B cell (primary cell): ENCODE measurements at regions of chr9 and their contacts with region 1.

Region 1: DNA sequence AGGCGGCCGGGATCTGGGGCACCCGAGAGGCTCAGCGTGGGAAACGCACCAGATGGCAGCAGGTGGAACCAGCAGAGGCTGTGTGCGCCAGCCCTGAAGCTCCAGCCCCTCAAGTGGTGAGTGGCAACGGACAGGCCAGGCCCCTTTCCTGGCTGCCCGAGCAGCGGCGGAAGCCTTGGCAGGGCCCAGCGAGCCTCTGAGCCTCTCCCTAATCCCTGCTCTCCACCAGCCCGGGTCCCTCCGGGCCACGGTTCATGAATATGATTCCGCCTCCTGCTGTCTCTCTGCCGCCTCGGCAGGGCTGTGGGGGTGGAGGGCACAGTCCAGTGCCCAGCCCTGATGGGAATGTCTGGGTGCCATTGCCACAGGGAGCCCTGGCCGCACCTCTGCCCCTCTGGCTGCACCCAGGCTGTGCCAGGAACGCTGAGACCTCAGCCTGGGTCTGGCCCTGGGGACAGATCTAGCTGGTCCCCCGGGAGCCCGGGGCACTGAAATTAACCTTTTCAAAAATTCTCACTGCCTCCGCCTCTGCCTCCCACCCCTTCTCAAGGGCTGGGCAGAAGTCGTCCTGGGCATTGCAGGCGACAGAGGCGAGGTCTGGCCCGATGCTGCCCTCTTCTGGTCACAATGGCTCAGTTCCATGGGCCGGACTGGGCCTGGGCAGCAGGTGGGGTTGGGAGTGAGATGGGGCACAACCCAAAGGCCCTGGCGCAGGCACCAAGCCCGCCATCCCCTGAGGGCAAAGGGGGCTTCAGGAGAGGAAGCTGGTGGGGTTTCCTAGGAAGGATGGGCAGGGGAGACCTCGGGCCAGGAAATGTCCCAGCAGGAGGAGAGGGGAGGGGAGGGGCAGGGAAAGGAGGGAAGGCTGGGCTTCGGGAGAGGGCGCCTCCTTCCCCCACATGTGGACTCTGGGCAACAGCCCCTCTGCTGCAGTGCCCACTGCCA is 20.3 kb downstream of the CCDC187 start:
- DNase-seq: peak; percentile 89
- ATAC-seq: peak; percentile 84
- H3K4me3 ChIP-seq: peak overlapping the region in 4 of 5 experiments; percentile 10 to 53 (median 39)
- H3K4me3 Mint-ChIP-seq: peak overlapping the region; percentile 94
- H3K27ac ChIP-seq: peak overlapping the region in 1 of 2 donors; percentile 33
- H3K27ac Mint-ChIP-seq: peak overlapping the region; percentile 86
- H3K4me1 ChIP-seq: peaks cover 18 to 25% of the 10 kb centered on the region in 2 donors
- H3K4me1 Mint-ChIP-seq: peaks cover 23% of the 10 kb centered on the region
- H3K27me3 ChIP-seq: peaks cover 0 to 3% (median 0%) of the 10 kb centered on the region in 4 experiments
- H3K27me3 Mint-ChIP-seq: peaks cover 13% of the 10 kb centered on the region
- CTCF ChIP-seq: peak; percentile 92

Region 2: GRCh38 chr9:135850737-135851136 is 432.8 kb before region 1 on chr9:
- CTCF ChIA-PET with region 1: no interaction called
- POLR2A ChIA-PET with region 1: no interaction called
- intact Hi-C with region 1: no loop called
- DNase-seq: no peak
- ATAC-seq: no peak
- H3K4me3 ChIP-seq: no peak overlapping the region
- H3K4me3 Mint-ChIP-seq: no peak overlapping the region
- H3K27ac ChIP-seq: no peak overlapping the region
- H3K27ac Mint-ChIP-seq: no peak overlapping the region
- H3K4me1 ChIP-seq: no peaks in the 10 kb centered on the region
- H3K4me1 Mint-ChIP-seq: no peaks in the 10 kb centered on the region
- H3K27me3 ChIP-seq: no peaks in the 10 kb centered on the region
- H3K27me3 Mint-ChIP-seq: no peaks in the 10 kb centered on the region
- CTCF ChIP-seq: no peak

Region 3: GRCh38 chr9:136118320-136119060 is 165.1 kb before region 1 on chr9 and contains the start of gene TMEM250:
- CTCF ChIA-PET with region 1: interaction called, 17 read pairs
- POLR2A ChIA-PET with region 1: no interaction called
- intact Hi-C with region 1: no loop called
- DNase-seq: peak; percentile 99
- ATAC-seq: peak; percentile 87
- H3K4me3 ChIP-seq: peak within 1 kb of the TSS; percentile 32 to 76 (median 64)
- H3K4me3 Mint-ChIP-seq: peak within 1 kb of the TSS; percentile 87
- H3K27ac ChIP-seq: peak within 1 kb of the TSS; percentile 51 to 94
- H3K27ac Mint-ChIP-seq: peak within 1 kb of the TSS; percentile 94
- H3K4me1 ChIP-seq: peaks cover 15 to 29% of the 10 kb centered on the region in 2 donors
- H3K4me1 Mint-ChIP-seq: peaks cover 14% of the 10 kb centered on the region
- H3K27me3 ChIP-seq: no peaks in the 10 kb centered on the region
- H3K27me3 Mint-ChIP-seq: no peaks in the 10 kb centered on the region
- CTCF ChIP-seq: no peak
- total RNA-seq, gene TMEM250: 29.6 and 30.4 TPM in 2 replicates

Region 4: DNA sequence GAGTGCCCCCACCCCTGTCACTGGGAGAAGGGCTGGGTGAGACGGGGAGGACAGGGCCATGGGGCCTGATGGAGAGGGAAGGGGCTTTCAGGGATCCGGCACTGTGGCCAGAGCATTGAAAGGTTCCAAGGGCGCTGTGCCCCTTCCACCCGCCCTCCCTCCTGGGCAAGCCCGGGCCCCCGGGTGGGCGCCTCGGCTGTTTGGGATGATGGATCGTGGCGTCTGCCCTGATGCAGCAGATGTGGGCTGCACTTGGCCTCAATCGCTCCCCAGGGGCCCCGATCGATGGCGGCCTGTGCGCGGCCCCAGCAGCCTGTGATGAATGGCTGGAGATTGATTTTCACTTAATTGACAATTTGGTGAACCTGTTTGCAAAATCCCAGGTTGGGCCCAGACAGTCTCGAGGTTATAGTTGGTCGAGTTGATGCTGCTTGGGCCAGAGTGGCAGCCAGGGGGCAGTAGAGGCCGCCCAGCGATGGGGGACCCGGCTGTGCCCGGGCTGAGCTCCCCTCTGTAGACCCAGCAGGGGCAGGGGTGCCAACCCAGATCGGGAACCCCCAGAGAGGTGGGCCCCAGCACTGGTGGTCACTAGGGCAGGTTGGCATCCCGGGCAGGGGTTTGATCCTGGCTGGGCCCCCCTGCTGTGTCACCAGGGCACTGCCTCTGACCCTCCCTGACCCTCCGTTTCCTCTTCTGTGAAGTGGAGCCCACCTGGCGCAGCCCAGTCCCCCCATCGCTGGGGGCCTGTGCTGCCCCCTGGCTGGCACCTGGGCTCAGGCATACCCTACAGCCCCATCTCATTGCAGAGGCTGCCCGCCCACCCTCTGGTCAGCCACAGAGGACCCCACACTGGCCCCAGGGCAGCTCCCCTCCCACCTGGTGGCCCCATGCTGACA is 113.3 kb before region 1 on chr9:
- CTCF ChIA-PET with region 1: interaction called, 103 read pairs
- POLR2A ChIA-PET with region 1: interaction called, 5 read pairs
- intact Hi-C with region 1: loop called (anchors 1 kb)
- DNase-seq: peak; percentile 80
- ATAC-seq: peak; percentile 97
- H3K4me3 ChIP-seq: no peak overlapping the region
- H3K4me3 Mint-ChIP-seq: no peak overlapping the region
- H3K27ac ChIP-seq: no peak overlapping the region
- H3K27ac Mint-ChIP-seq: peak overlapping the region; percentile 68
- H3K4me1 ChIP-seq: peaks cover 0 to 15% of the 10 kb centered on the region in 2 donors
- H3K4me1 Mint-ChIP-seq: peaks cover 11% of the 10 kb centered on the region
- H3K27me3 ChIP-seq: peaks cover 0 to 35% (median 4%) of the 10 kb centered on the region in 4 experiments
- H3K27me3 Mint-ChIP-seq: peaks cover 21% of the 10 kb centered on the region
- CTCF ChIP-seq: peak; percentile 85

Region 5: GRCh38 chr9:136245219-136246150 is 38.1 kb before region 1 on chr9 and contains the start of gene QSOX2:
- CTCF ChIA-PET with region 1: interaction called, 15 read pairs
- POLR2A ChIA-PET with region 1: interaction called, 3 read pairs
- intact Hi-C with region 1: loop called (anchors 1 kb)
- DNase-seq: peak; percentile 91
- ATAC-seq: peak; percentile 71
- H3K4me3 ChIP-seq: peak within 1 kb of the TSS; percentile 66 to 97 (median 90)
- H3K4me3 Mint-ChIP-seq: peak within 1 kb of the TSS; percentile 94
- H3K27ac ChIP-seq: peak within 1 kb of the TSS; percentile 70 to 83
- H3K27ac Mint-ChIP-seq: peak within 1 kb of the TSS; percentile 90
- H3K4me1 ChIP-seq: peaks cover 46 to 51% of the 10 kb centered on the region in 2 donors
- H3K4me1 Mint-ChIP-seq: peaks cover 50% of the 10 kb centered on the region
- H3K27me3 ChIP-seq: no peaks in the 10 kb centered on the region
- H3K27me3 Mint-ChIP-seq: no peaks in the 10 kb centered on the region
- CTCF ChIP-seq: no peak
- total RNA-seq, gene QSOX2: 139 and 141 TPM in 2 replicates

Region 6: DNA sequence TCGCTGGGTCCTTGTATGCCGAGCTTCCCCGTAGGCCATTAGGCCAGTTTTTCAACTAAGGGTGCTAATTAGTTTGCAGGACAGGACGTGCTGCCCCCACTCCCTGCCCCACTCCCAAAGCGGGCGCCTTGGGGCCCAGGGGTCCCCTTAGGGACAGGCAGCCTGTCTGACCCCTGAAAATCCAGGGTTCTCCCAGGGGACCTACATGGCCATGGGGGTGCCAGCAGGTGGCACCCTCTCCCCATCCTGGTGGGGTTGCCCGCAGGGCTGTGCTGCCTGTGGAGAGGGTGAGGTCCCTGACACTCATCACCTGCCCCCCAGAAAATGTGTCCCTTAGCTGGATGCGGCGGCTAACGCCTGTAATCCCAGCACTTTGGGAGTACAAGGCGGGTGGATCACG is 28.9 kb after region 1 on chr9:
- CTCF ChIA-PET with region 1: no interaction called
- POLR2A ChIA-PET with region 1: interaction called, 5 read pairs
- intact Hi-C with region 1: loop called (anchors 1 kb)
- DNase-seq: peak; percentile 62
- ATAC-seq: peak; percentile 31
- H3K4me3 ChIP-seq: no peak overlapping the region
- H3K4me3 Mint-ChIP-seq: peak overlapping the region; percentile 14
- H3K27ac ChIP-seq: no peak overlapping the region
- H3K27ac Mint-ChIP-seq: no peak overlapping the region
- H3K4me1 ChIP-seq: peaks cover 48 to 49% of the 10 kb centered on the region in 2 donors
- H3K4me1 Mint-ChIP-seq: peaks cover 11% of the 10 kb centered on the region
- H3K27me3 ChIP-seq: peaks cover 0 to 28% (median 2%) of the 10 kb centered on the region in 4 experiments
- H3K27me3 Mint-ChIP-seq: peaks cover 11% of the 10 kb centered on the region
- CTCF ChIP-seq: peak; percentile 47

Region 7: DNA sequence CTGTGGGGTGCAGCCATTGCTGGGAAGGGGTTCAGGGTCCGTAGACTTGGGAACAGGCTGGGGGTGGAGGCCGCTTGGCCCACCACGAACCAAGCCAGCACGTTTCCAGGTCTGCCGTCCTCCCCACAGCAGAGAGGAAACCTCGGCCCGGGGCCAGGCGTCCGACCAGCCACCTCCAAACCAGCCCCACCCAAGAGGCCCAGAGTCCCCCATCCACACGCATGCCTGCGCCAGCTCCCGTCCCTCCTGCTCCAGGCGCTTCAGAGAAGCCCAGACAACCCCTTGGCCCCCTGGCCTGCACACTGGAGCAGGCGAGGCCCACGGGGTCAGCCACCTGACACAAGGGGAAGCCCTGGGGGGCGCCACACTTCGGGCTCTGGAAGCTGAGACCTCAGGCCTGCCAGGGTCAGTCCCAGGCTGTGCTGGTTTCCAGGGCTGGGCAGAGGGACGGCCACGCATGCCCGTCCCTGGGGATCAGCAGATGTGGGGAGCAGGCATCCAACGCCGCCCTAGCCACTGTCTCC is 73.7 kb after region 1 on chr9:
- CTCF ChIA-PET with region 1: no interaction called
- POLR2A ChIA-PET with region 1: no interaction called
- intact Hi-C with region 1: no loop called
- DNase-seq: no peak
- ATAC-seq: no peak
- H3K4me3 ChIP-seq: no peak overlapping the region
- H3K4me3 Mint-ChIP-seq: no peak overlapping the region
- H3K27ac ChIP-seq: no peak overlapping the region
- H3K27ac Mint-ChIP-seq: no peak overlapping the region
- H3K4me1 ChIP-seq: no peaks in the 10 kb centered on the region
- H3K4me1 Mint-ChIP-seq: no peaks in the 10 kb centered on the region
- H3K27me3 ChIP-seq: no peaks in the 10 kb centered on the region
- H3K27me3 Mint-ChIP-seq: no peaks in the 10 kb centered on the region
- CTCF ChIP-seq: no peak

Region 8: GRCh38 chr9:136400038-136400834 is 116.7 kb after region 1 on chr9 and contains the start of gene SNAPC4:
- CTCF ChIA-PET with region 1: no interaction called
- POLR2A ChIA-PET with region 1: no interaction called
- intact Hi-C with region 1: loop called (anchors 1 kb)
- DNase-seq: peak; percentile 92
- ATAC-seq: peak; percentile 91
- H3K4me3 ChIP-seq: peak within 1 kb of the TSS; percentile 30 to 83 (median 76)
- H3K4me3 Mint-ChIP-seq: peak within 1 kb of the TSS; percentile 89
- H3K27ac ChIP-seq: peak within 1 kb of the TSS in 1 of 2 donors; percentile 54
- H3K27ac Mint-ChIP-seq: peak within 1 kb of the TSS; percentile 70
- H3K4me1 ChIP-seq: peaks cover 37 to 41% of the 10 kb centered on the region in 2 donors
- H3K4me1 Mint-ChIP-seq: peaks cover 42% of the 10 kb centered on the region
- H3K27me3 ChIP-seq: no peaks in the 10 kb centered on the region
- H3K27me3 Mint-ChIP-seq: no peaks in the 10 kb centered on the region
- CTCF ChIP-seq: peak; percentile 94
- total RNA-seq, gene SNAPC4: 15.4 and 15.6 TPM in 2 replicates